ENCODE measurements at regions of chr1 and their contacts with region 1.

Region 1: DNA sequence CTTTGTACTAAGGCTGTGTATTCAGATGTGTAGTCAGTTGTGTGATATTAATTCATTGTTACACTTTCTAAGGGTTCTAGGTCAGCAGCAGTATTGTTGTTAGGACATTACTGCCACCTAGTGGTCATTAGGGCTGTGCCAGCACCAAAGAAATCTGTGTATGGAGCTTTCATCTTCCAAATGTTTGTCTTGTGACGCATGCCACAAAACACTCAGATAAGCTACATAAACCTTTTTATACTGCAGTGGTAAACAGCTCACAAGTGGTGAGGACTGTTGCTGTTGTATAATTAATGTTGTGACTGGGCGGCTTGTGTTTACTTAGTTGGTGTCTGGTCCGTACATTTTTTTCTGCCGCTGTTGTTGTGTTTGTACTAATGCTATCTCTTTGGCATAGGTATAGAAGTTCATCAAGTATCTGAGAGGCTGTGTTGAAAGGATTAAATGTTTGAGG is 51.7 kb downstream of the S1PR1 start:
- DNase-seq: peak; percentile 70 to 75
- H3K4me3 ChIP-seq: no peak overlapping the region
- H3K4me1 ChIP-seq: peaks cover 9% of the 10 kb centered on the region
- H3K27me3 ChIP-seq: no peaks in the 10 kb centered on the region

Region 2: DNA sequence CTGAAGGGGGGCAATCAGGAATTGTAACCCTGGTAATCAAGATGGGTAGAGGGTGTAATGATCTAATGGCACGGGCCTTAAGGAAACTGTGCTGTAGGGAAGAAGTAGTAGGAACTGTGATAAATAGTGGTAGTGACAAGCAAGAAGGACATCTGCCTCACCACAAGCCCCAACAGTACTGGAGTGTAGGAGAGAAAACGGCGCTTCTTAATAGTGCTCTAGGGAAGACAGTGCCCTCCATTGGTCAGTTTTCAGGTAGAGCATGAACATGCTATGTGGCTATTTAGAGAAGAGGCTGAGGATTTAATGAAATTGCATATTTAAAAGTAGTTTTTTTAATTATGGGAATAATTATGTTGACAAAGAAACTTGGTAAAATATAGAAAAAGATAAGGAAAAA is 360.4 kb before region 1 on chr1:
- in situ Hi-C with region 1: loop called (anchors 5 kb)
- DNase-seq: no peak
- H3K4me3 ChIP-seq: no peak overlapping the region
- H3K4me1 ChIP-seq: no peaks in the 10 kb centered on the region
- H3K27me3 ChIP-seq: no peaks in the 10 kb centered on the region

Region 3: GRCh38 chr1:101071470-101071891 is 217.0 kb before region 1 on chr1:
- in situ Hi-C with region 1: no loop called
- DNase-seq: no peak
- H3K4me3 ChIP-seq: no peak overlapping the region
- H3K4me1 ChIP-seq: peaks cover 13% of the 10 kb centered on the region; the same call in 1 of the 2 replicates
- H3K27me3 ChIP-seq: no peaks in the 10 kb centered on the region

Region 4: GRCh38 chr1:101547357-101547756 is 258.8 kb after region 1 on chr1:
- in situ Hi-C with region 1: no loop called
- DNase-seq: no peak
- H3K4me3 ChIP-seq: no peak overlapping the region
- H3K4me1 ChIP-seq: peaks cover 2% of the 10 kb centered on the region; the same call in 1 of the 2 replicates
- H3K27me3 ChIP-seq: no peaks in the 10 kb centered on the region

Measured in HAP-1 (cell line).